CD4-positive, alpha-beta memory T cell (primary cell): ENCODE measurements at regions of chr22 and their contacts with region 1.

Region 1: GRCh38 chr22:17171313-17172171 is 12.5 kb upstream of the HDHD5 start:
- DNase-seq: peak; percentile 61 to 74 (median 71)
- H3K4me3 ChIP-seq: peak overlapping the region in 1 of 2 donors; percentile 78
- H3K4me3 Mint-ChIP-seq: peak overlapping the region; percentile 79 to 90 (median 87)
- H3K27ac ChIP-seq: peak overlapping the region; percentile 50
- H3K27ac Mint-ChIP-seq: peak overlapping the region; percentile 32 to 90 (median 80)
- H3K4me1 ChIP-seq: peaks cover 5% of the 10 kb centered on the region
- H3K4me1 Mint-ChIP-seq: peaks cover 2 to 8% (median 5%) of the 10 kb centered on the region in 4 donors
- H3K27me3 ChIP-seq: no peaks in the 10 kb centered on the region
- H3K27me3 Mint-ChIP-seq: no peaks in the 10 kb centered on the region

Region 2: DNA sequence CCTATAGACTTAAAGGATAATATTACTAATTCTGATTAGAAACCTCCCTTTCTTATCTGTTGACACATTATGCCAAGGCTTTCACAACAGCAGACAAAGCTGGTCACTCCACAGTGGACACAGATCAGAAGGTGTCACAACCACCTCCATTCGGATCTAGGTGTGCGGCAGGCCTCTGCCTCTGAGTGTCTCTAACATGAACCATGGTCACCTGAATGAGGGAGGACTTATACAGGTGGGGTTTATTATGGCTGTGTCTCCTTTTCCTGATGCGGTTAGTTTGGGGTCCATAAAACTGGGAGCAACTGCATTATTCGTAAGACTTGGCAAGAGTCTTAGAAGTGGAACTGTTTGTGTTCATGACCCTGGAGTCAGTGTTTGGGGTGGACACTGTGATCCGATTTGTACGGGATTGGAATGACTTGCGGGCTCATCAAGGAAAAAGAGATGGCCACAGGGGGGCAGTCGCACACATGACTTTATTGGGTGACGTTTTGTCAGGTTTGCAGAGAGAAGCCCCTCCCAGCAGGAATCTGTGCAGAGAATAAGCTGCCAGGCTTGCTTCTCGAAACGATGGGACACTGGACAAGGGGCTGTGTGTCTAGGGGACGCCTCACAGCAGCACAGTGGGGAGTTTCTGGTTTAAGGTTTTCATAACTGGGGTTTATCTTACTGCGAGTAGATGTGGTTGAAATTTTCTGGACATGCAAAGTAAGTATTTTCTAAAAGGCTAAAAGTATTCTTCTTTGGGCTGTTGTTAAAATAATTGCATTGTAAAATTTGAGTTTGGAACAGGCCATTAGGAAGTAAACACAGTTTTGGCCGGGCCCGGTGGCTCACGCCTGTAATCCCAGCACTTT is 254.2 kb before region 1 on chr22:
- CTCF ChIA-PET with region 1: no interaction called
- POLR2A ChIA-PET with region 1: no interaction called
- intact Hi-C with region 1: loop called (anchors 5 kb)
- DNase-seq: peak in 4 of 5 donors; percentile 14 to 28 (median 25)
- H3K4me3 ChIP-seq: no peak overlapping the region
- H3K4me3 Mint-ChIP-seq: no peak overlapping the region
- H3K27ac ChIP-seq: no peak overlapping the region
- H3K27ac Mint-ChIP-seq: no peak overlapping the region
- H3K4me1 ChIP-seq: no peaks in the 10 kb centered on the region
- H3K4me1 Mint-ChIP-seq: peaks cover 0 to 2% (median 0%) of the 10 kb centered on the region in 4 donors
- H3K27me3 ChIP-seq: no peaks in the 10 kb centered on the region
- H3K27me3 Mint-ChIP-seq: peaks cover 20 to 29% of the 10 kb centered on the region in 2 donors

Region 3: DNA sequence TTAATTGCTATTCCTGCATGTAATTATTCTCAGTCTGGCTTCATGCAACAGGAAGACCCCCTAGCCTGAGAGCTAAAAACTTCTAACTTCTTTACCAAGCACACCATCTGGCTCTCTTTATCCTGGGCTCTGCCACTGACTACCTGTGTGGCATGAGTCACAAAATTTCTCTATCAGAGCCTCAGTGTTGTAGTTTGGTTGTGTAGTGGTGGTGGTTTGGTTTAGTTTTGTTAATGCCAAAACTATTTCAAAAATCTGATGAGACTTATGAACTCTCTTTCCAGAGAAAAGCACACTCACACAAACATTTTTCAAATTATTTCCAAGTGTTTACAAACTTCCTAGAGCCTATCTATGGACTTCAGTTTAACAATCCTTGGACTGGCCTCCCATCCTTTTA is 94.3 kb before region 1 on chr22:
- CTCF ChIA-PET with region 1: interaction called, 174 read pairs
- POLR2A ChIA-PET with region 1: interaction called, 12 read pairs
- intact Hi-C with region 1: loop called (anchors 1 kb)
- DNase-seq: no peak
- H3K4me3 ChIP-seq: no peak overlapping the region
- H3K4me3 Mint-ChIP-seq: no peak overlapping the region
- H3K27ac ChIP-seq: no peak overlapping the region
- H3K27ac Mint-ChIP-seq: no peak overlapping the region
- H3K4me1 ChIP-seq: peaks cover 11% of the 10 kb centered on the region
- H3K4me1 Mint-ChIP-seq: peaks cover 7 to 19% (median 14%) of the 10 kb centered on the region in 4 donors
- H3K27me3 ChIP-seq: peaks cover 5% of the 10 kb centered on the region
- H3K27me3 Mint-ChIP-seq: no peaks in the 10 kb centered on the region

Region 4: DNA sequence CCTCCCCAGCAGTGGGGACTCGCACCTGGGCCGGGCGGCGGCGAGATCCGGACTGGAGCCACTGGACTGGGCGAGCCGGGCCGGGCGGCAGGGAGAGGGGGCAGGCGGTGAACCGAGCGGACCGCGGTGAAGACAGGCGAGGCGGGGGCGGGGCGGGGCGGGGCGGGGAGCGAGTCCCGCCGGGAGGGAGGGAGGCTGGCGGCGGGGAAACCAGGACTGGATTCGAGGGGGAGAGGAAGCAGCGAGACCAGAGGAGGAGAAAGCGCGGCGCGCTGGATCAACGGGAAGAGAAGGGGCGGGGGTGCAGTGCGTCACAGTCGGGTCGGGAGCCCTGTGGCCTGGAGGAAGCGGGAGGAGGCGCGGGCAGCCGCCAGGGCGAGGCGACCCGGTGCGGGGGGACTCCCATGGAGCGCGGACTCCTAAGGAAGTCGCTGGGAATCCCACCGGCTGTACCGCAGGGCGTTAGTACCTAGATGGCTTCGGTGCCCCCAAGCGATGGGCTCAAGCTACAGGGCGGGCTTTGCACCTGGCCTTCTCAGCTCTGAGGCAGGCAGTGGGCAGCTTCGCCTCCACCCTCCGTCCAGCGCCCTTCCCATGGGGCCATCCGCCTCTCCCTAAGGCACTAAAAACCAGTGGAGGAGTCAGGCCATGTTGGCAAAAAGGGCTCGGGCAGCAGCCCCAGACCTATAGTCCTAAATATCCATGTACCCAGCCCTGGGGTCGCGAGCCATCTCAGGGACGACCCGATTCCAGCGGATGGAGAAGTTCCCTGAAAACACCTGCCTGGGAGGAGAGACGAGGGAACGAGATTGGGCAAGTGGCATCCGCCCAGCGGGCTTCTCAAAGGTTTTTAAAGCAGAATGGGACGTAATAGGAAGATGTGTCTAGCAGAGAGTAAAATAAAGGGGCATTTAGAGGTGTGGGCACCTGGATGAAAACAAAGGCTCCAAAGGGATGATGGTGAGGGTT is 50.0 kb before region 1 on chr22 and contains the start of gene TMEM121B:
- CTCF ChIA-PET with region 1: interaction called, 11 read pairs
- POLR2A ChIA-PET with region 1: interaction called, 3 read pairs
- intact Hi-C with region 1: no loop called
- DNase-seq: no peak
- H3K4me3 ChIP-seq: no peak within 1 kb of the TSS
- H3K4me3 Mint-ChIP-seq: peak within 1 kb of the TSS; percentile 51 to 74 (median 62)
- H3K27ac ChIP-seq: no peak within 1 kb of the TSS
- H3K27ac Mint-ChIP-seq: peak within 1 kb of the TSS in 1 of 7 donors; percentile 23
- H3K4me1 ChIP-seq: peaks cover 44% of the 10 kb centered on the region
- H3K4me1 Mint-ChIP-seq: peaks cover 25 to 39% (median 31%) of the 10 kb centered on the region in 4 donors
- H3K27me3 ChIP-seq: peaks cover 14% of the 10 kb centered on the region
- H3K27me3 Mint-ChIP-seq: peaks cover 8 to 15% of the 10 kb centered on the region in 2 donors
- total RNA-seq, gene TMEM121B: 0.12 TPM in 1 of 2 experiments, not detected in the other

Region 5: DNA sequence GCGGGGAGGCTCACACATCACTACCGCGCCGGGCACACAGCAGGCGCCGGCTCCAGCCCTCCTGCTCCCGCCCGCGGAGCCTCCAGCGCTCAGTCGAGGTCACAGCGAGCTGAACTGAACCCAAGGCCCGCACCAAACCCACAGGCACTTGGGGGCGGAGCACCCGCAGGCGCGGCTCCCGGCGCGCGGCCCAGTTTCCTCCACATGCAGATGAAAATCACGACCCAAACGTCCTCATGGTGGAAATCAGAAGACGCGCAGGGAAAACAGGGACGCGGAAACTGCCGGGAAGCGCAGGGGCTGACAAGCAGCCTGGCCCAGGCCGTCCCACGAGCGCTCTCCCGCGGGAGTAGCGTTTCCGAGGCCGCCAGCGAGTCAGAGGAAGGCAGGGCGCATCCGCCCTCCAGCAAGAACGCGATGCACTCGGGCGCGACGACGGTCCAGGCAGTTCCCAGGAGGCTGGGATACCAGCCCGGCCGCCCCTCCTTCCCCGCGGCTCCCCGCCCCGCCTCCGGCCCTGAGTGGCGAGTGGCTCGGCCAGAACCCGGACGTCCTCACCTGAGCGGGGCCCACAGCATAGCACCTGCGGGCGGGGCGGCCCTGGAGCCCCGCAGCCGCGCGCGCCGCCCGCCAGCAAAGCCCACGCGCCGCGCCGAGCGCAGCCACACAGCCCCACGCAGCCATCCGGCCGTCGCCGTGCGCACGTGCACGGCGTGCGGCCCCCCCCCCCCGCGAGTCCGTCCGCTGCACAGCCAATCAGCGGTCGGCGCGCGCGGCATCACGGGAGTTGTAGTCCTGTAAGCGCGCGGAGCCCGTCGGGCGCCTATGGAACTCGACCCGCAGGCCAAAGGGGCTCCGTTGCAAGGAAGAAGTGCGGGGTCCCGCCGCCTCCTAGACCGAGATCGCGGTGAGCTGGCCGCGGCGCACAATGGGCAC is 12.7 kb before region 1 on chr22 and contains the start of gene HDHD5:
- CTCF ChIA-PET with region 1: interaction called, 36 read pairs
- POLR2A ChIA-PET with region 1: interaction called, 21 read pairs
- intact Hi-C with region 1: no loop called
- DNase-seq: peak; percentile 81 to 87 (median 85)
- H3K4me3 ChIP-seq: peak within 1 kb of the TSS; percentile 52 to 81
- H3K4me3 Mint-ChIP-seq: peak within 1 kb of the TSS; percentile 84 to 90 (median 88)
- H3K27ac ChIP-seq: peak within 1 kb of the TSS; percentile 46
- H3K27ac Mint-ChIP-seq: peak within 1 kb of the TSS; percentile 77 to 88 (median 85)
- H3K4me1 ChIP-seq: peaks cover 36% of the 10 kb centered on the region
- H3K4me1 Mint-ChIP-seq: peaks cover 17 to 48% (median 24%) of the 10 kb centered on the region in 4 donors
- H3K27me3 ChIP-seq: no peaks in the 10 kb centered on the region
- H3K27me3 Mint-ChIP-seq: no peaks in the 10 kb centered on the region
- total RNA-seq, gene HDHD5: 23.1 to 23.3 TPM

Region 6: GRCh38 chr22:17213976-17214375 is 42.4 kb after region 1 on chr22:
- CTCF ChIA-PET with region 1: interaction called, 19 read pairs
- POLR2A ChIA-PET with region 1: interaction called, 13 read pairs
- intact Hi-C with region 1: loop called (anchors 5 kb)
- DNase-seq: peak in 4 of 5 donors; percentile 29 to 48 (median 38)
- H3K4me3 ChIP-seq: no peak overlapping the region
- H3K4me3 Mint-ChIP-seq: peak overlapping the region in 2 of 8 donors; percentile 13 to 54
- H3K27ac ChIP-seq: no peak overlapping the region
- H3K27ac Mint-ChIP-seq: peak overlapping the region in 2 of 7 donors; percentile 25 to 42
- H3K4me1 ChIP-seq: peaks cover 37% of the 10 kb centered on the region
- H3K4me1 Mint-ChIP-seq: peaks cover 29 to 64% (median 46%) of the 10 kb centered on the region in 4 donors
- H3K27me3 ChIP-seq: no peaks in the 10 kb centered on the region
- H3K27me3 Mint-ChIP-seq: no peaks in the 10 kb centered on the region

Region 7: DNA sequence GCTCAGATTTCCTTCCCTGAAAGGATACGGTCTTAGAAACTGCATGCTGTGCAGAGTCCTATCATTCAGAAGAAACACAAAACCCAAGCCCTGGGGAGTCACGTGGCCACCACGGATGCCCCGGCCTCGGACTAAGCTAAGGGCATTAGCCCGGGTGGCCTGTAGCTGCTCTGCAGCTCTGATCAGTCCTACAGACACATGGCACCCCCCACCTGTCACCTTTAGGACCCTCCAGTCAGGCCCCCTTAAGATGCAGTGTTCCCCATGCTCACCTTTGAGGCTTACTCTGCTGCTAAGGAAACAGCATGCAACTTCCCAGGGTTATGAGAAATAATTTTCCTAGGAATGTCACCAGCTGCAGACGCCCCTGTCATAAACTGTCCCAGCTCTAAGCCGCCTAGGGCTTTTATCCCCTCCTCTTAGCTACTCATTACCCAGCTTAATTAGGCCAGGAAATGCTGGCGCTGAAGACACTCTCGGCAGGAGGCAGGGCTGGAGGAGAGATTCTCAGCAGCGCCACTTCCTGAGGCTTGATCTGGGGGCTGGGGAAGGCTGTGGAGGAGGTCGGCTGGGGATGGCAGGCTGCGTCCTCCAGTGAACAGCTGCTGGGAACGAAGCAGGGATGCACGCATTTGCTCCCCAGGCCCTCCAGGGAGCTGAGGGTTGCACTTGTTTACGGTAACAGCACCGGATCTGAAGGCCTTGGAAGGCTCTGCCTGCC is 94.9 kb after region 1 on chr22:
- CTCF ChIA-PET with region 1: interaction called, 13 read pairs
- POLR2A ChIA-PET with region 1: no interaction called
- intact Hi-C with region 1: no loop called
- DNase-seq: peak in 4 of 5 donors; percentile 24 to 39 (median 26)
- H3K4me3 ChIP-seq: no peak overlapping the region
- H3K4me3 Mint-ChIP-seq: peak overlapping the region in 7 of 8 donors; percentile 1 to 65 (median 38)
- H3K27ac ChIP-seq: no peak overlapping the region
- H3K27ac Mint-ChIP-seq: peak overlapping the region in 5 of 7 donors; percentile 68 to 86 (median 83)
- H3K4me1 ChIP-seq: peaks cover 17% of the 10 kb centered on the region
- H3K4me1 Mint-ChIP-seq: peaks cover 8 to 32% (median 16%) of the 10 kb centered on the region in 4 donors
- H3K27me3 ChIP-seq: no peaks in the 10 kb centered on the region
- H3K27me3 Mint-ChIP-seq: no peaks in the 10 kb centered on the region